ENCODE measurements at regions of chr22 and their contacts with region 1.

Region 1: DNA sequence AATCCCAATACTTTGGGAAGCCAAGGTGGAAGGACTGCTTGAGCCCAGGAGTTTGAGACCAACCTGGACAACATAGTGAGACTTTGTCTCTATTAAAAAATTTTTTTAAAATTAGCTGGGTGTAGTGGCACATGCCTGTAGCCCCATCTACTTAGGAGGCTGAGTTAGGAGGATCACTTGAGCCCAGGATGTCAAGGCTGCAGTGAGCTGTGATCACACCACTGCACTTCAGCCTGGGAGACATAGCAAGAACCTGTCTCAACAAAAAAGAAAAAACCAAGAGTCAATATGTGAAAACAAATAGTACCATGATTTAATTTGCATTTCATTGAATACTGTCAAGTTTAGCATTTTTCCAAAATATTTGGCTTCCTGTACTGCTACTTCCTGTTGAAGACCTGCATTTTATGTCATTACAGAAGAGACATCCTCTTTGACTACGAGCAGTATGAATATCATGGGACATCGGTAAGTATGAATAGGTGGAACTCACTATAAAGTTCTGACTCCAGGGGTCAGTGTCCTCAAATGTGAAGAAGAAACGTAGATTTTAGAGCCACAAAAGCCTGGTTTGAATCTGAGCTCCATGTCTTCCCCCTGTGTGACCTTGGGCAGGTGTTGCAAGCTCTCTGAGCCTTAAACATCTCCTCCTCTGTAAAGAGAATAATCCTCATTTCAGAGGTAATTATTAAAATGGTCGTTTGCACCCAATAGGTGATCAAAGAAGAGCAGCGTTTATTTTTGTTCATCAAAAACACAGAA is 16.0 kb downstream of the CDC45 start:
- DNase-seq: peak in 1 of 4 donors; percentile 21
- ATAC-seq: no peak
- H3K4me3 ChIP-seq: no peak overlapping the region
- H3K27ac ChIP-seq: no peak overlapping the region
- H3K4me1 ChIP-seq: no peaks in the 10 kb centered on the region
- H3K27me3 ChIP-seq: no peaks in the 10 kb centered on the region
- CTCF ChIP-seq: no peak

Region 2: DNA sequence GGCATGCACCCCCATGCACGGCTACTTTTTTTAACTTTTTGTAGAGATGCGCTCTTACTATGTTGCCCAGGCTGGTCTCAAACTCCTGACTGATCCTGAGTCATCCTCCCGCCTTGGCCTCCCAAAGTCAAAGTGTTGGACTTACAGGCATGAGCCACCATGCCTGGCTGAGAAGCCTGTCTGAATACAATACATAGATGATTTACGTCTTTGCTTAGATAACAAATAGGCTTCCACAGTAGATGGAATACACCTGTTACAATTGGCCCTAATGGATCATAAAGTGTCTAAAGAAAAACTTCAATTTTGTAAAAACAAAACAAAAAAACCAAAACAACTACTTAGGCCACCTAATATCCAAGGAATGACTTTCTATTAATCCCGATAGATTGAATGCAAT is 191.2 kb before region 1 on chr22:
- intact Hi-C with region 1: no loop called
- DNase-seq: no peak
- ATAC-seq: no peak
- H3K4me3 ChIP-seq: no peak overlapping the region
- H3K27ac ChIP-seq: no peak overlapping the region
- H3K4me1 ChIP-seq: no peaks in the 10 kb centered on the region
- H3K27me3 ChIP-seq: no peaks in the 10 kb centered on the region
- CTCF ChIP-seq: no peak

Region 3: DNA sequence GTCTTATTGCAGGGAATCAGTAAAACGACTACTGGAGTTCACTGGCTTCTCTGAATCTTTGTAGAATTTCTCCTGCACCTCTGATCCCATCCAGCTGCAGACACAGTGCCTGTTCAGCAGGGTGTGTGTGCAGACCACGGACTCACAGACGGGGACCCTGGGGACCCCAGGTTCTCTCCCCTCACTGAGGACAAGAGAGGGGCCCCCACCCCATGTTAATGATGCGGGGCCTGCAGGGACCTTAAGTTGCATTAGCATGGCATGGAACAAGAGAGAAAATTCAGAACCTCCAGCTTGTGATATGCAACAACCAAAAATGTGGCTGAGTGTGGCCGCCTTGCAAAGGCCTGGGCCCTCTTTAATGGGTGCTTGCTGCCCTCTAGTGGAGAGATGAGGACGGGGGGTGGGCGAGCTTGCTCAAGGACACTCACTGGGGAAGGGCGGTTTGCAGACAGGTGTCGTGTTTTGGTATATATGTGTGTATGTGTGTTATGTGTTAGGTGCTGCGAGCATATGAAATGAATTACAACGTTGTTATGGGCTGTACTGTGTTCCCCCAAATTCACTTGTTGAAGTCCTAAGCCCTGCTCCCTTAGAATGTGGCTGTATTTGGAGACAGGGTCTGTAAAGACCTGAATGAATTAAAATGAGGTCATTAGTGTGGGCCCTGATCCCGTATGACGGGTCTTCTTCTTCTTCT is 134.1 kb after region 1 on chr22:
- intact Hi-C with region 1: loop called (anchors 10 kb)
- DNase-seq: peak; percentile 65 to 87 (median 80)
- ATAC-seq: peak; percentile 97
- H3K4me3 ChIP-seq: no peak overlapping the region
- H3K27ac ChIP-seq: no peak overlapping the region
- H3K4me1 ChIP-seq: peaks cover 0 to 5% of the 10 kb centered on the region in 2 donors
- H3K27me3 ChIP-seq: peaks cover 0 to 6% of the 10 kb centered on the region in 2 donors
- CTCF ChIP-seq: peak; percentile 83 to 91

Region 4: GRCh38 chr22:19766511-19767426 is 271.0 kb after region 1 on chr22:
- intact Hi-C with region 1: no loop called
- DNase-seq: peak in 2 of 4 donors; percentile 76 to 90
- ATAC-seq: peak; percentile 81
- H3K4me3 ChIP-seq: peak overlapping the region; percentile 22 to 32
- H3K27ac ChIP-seq: peak overlapping the region in 1 of 2 donors; percentile 53
- H3K4me1 ChIP-seq: peaks cover 13 to 32% of the 10 kb centered on the region in 2 donors
- H3K27me3 ChIP-seq: peaks cover 76 to 100% of the 10 kb centered on the region in 2 donors
- CTCF ChIP-seq: no peak

Measured in left lung (tissue), 14 donors.